ENCODE measurements at regions of chr16 and their contacts with region 1.

Region 1: GRCh38 chr16:81035398-81035974 is at the start of gene ATMIN:
- DNase-seq: peak; percentile 91
- H3K4me3 ChIP-seq: peak within 1 kb of the TSS; percentile 77 to 94 (median 87)
- H3K27ac ChIP-seq: peak within 1 kb of the TSS; percentile 84 to 89 (median 86)
- H3K4me1 ChIP-seq: peaks cover 6 to 32% (median 12%) of the 10 kb centered on the region in 4 donors
- H3K27me3 ChIP-seq: no peaks in the 10 kb centered on the region
- CTCF ChIP-seq: peak; percentile 90 to 99 (median 96)
- EP300 ChIP-seq: no peak
- POLR2A ChIP-seq: no peak
- total RNA-seq, gene ATMIN: 24.7 to 86.0 (median 35.5) TPM

Region 2: GRCh38 chr16:79776224-79776847 is 1259.2 kb before region 1 on chr16:
- in situ Hi-C with region 1: no loop called
- intact Hi-C with region 1: loop called (anchors 5 kb)
- DNase-seq: peak; percentile 33
- H3K4me3 ChIP-seq: no peak overlapping the region
- H3K27ac ChIP-seq: peak overlapping the region in 3 of 4 donors; percentile 10 to 54 (median 51)
- H3K4me1 ChIP-seq: peaks cover 5 to 36% (median 21%) of the 10 kb centered on the region in 4 donors
- H3K27me3 ChIP-seq: no peaks in the 10 kb centered on the region
- CTCF ChIP-seq: peak in 1 of 5 experiments; percentile 34
- EP300 ChIP-seq: no peak
- POLR2A ChIP-seq: no peak

Region 3: DNA sequence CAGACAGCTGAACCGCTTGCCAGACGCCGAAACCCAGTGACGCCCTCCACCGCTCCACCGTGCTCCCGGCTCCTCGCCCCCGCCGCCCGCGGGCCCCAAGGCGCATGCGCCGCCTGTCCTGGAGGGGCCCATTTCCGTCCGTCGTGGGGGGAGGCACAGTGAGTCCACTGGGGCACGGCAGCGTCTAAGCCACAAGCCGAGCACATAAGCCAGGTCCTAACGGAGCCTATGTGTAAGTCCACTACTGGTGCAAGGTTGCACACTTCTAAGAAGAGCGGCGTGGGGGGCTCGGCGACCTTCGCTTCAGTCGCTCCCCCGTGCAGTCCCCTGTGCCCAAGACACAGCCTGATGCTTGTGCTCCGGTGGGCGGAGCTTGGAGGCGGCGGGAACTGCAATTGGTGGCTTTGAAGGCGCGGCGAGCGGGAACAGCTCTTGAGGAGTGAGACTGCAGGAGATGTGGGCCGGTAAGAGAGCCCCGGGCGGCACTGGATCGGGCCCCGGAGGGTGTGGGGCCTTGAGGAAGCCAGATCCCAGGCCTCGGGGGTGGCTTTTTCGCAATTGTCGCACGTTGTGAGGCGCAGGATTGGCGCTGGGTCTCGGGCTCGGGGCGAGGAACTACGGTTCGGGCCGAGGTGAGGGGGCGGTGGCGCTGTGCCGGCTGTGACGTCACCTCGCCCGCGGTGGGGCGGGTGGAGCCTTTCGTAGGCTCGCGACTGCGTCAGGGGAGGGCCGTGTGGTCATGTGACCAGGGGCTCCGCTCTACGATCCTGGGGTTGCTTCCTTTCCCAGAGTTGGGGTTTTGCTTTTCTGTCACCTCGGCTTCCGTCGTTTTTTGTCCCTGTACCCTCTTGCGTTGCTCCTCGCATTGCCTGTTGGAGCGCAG is 28.4 kb before region 1 on chr16 and contains the starts of genes CENPN and CMC2:
- in situ Hi-C with region 1: no loop called
- intact Hi-C with region 1: loop called (anchors 1 kb)
- DNase-seq: peak; percentile 99
- H3K4me3 ChIP-seq: peak within 1 kb of the TSS; percentile 76 to 95 (median 86)
- H3K27ac ChIP-seq: peak within 1 kb of the TSS; percentile 96 to 100 (median 98)
- H3K4me1 ChIP-seq: peaks cover 4 to 29% (median 21%) of the 10 kb centered on the region in 4 donors
- H3K27me3 ChIP-seq: no peaks in the 10 kb centered on the region
- CTCF ChIP-seq: peak in 2 of 5 experiments; percentile 12 to 42
- EP300 ChIP-seq: no peak
- POLR2A ChIP-seq: peak; percentile 91
- total RNA-seq, gene CENPN: 4.9 to 12.7 (median 8.5) TPM
- total RNA-seq, gene CMC2: 2.8 to 42.9 (median 29.8) TPM

Region 4: GRCh38 chr16:81077076-81077940 is 41.8 kb after region 1 on chr16 and contains the start of gene C16orf46:
- in situ Hi-C with region 1: no loop called
- intact Hi-C with region 1: loop called (anchors 5 kb)
- DNase-seq: peak; percentile 99
- H3K4me3 ChIP-seq: peak within 1 kb of the TSS; percentile 48 to 76 (median 66)
- H3K27ac ChIP-seq: peak within 1 kb of the TSS; percentile 92 to 97 (median 95)
- H3K4me1 ChIP-seq: peaks cover 0 to 10% (median 5%) of the 10 kb centered on the region in 4 donors
- H3K27me3 ChIP-seq: no peaks in the 10 kb centered on the region
- CTCF ChIP-seq: peak in 1 of 5 experiments; percentile 16
- EP300 ChIP-seq: no peak
- POLR2A ChIP-seq: peak; percentile 91
- total RNA-seq, gene C16orf46: 0.32 to 5.6 TPM in 2 of 4 donors, not detected in the others

Region 5: GRCh38 chr16:81737885-81738786 is 702.6 kb after region 1 on chr16:
- in situ Hi-C with region 1: loop called in 3 of 4 experiments (anchors 25 kb)
- intact Hi-C with region 1: loop called (anchors 10 kb)
- DNase-seq: peak; percentile 92
- H3K4me3 ChIP-seq: peak overlapping the region in 1 of 4 donors; percentile 37
- H3K27ac ChIP-seq: peak overlapping the region in 2 of 4 donors; percentile 12 to 28
- H3K4me1 ChIP-seq: peaks cover 0 to 12% (median 9%) of the 10 kb centered on the region in 4 donors
- H3K27me3 ChIP-seq: no peaks in the 10 kb centered on the region
- CTCF ChIP-seq: peak; percentile 83 to 94 (median 85)
- EP300 ChIP-seq: no peak
- POLR2A ChIP-seq: no peak